ENCODE measurements at regions of chr16 and their contacts with region 1.

Region 1: GRCh38 chr16:28067604-28068379 is 4.3 kb upstream of the GSG1L start:
- H3K4me3 ChIP-seq: no peak overlapping the region
- H3K27ac ChIP-seq: no peak overlapping the region
- H3K4me1 ChIP-seq: no peaks in the 10 kb centered on the region; the same call in 1 of the 2 replicates
- CTCF ChIP-seq: no peak

Region 2: DNA sequence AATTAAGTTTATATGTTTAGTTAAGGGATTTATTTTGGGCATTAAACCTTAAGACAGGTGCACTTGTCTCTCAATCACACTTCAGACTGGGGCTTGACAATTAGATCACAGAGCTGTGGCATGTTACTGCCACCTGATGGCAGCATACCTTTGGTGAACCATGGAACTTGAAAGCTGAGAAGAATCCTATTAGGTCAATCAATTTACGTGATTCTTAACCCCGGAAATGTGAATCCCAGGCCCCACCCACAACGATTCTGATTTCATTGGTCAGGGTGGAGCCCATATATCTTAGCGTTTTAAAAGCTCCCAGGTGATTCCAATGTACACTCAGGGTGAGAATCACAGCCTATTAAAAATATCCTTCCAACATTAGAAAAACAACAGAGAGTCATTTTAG is 95.3 kb before region 1 on chr16:
- CTCF ChIA-PET with region 1: interaction called, 75 read pairs
- POLR2A ChIA-PET with region 1: no interaction called
- H3K4me3 ChIP-seq: no peak overlapping the region
- H3K27ac ChIP-seq: no peak overlapping the region
- H3K4me1 ChIP-seq: no peaks in the 10 kb centered on the region
- CTCF ChIP-seq: no peak; the same call in 1 of the 2 replicates

Region 3: DNA sequence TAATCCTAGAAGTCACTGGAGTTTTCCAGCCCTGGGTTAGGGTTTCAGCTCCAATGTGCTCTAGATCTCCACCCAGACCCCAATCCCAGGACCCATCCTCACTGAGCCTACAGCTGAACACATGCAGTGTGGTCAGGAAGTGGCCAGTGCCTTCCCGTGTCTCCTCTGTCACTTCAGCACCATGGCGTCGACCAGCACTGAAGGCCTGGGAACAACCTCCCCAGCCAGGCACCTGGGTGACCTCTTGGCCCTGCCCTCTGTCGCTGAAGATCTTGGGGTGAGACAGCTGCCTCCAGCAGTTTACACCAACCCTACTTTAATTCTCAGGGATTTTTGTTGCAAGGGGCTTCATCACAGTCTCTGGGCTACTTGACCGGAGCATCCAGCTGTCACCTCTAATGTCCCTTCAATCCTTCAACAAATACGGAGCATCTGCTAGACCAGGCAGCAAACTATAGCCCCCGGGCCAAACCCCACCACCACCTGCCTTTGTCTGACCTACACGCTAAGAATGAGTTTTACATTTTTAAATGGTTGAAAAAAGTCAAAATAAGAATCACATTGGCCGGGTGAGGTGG is 13.7 kb after region 1 on chr16:
- CTCF ChIA-PET with region 1: interaction called, 19 read pairs
- POLR2A ChIA-PET with region 1: no interaction called
- H3K4me3 ChIP-seq: no peak overlapping the region
- H3K27ac ChIP-seq: no peak overlapping the region
- H3K4me1 ChIP-seq: no peaks in the 10 kb centered on the region
- CTCF ChIP-seq: no peak

Region 4: GRCh38 chr16:28218104-28218503 is 150.3 kb after region 1 on chr16:
- CTCF ChIA-PET with region 1: interaction called, 10 read pairs
- POLR2A ChIA-PET with region 1: no interaction called
- H3K4me3 ChIP-seq: no peak overlapping the region
- H3K27ac ChIP-seq: no peak overlapping the region
- H3K4me1 ChIP-seq: no peaks in the 10 kb centered on the region
- CTCF ChIP-seq: no peak; the same call in 1 of the 2 replicates

Measured in HEK293 (cell line).